ENCODE measurements at regions of chr1 and their contacts with region 1.

Region 1: DNA sequence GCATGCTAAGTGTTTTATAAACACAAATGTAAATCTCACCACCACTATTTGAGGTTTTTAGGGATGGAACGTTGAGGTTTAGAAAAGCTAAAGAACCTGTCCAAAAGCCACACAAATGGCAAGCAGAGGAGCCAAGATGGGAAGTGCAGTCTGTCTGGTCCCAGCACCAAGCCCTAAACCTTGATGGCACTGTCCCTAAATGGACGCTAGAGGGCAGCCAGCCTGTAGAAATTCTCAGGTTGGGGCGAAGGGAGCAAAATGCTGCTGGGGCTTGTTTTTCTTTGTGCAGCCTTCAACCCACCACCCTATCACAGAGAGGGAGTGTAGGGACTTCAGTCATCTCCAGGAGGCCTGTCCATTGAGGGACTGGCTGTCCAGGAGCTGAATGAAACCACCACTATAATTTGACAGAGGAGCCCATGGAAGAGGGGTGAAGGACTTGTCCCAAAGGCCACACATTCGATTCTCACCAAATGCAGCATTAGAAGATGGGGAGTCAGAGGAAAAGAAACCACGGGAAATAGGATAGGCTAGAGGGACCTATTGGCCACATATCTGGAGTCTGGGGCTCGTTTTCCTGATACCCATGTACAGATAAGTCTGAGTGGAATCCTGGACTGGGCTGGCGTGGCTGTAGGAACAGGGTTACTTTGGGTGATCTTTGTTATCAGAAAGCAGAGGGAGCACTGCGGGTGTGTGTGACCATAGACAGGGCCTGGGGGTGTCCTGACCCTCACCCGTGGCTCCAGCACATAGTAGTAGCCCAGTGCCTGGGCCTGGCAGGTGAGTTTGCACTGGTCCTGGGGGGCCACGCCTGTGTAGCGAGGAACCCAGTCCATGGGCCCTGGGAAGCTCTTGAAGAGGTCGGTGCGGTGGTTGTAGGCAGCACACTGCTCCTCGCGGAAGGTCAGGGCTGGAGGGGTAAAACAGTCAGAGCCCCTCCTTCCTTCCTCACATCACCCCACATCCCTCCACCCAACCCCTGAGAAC is 6.1 kb downstream of the ADAMTS4 start:
- DNase-seq: peak; percentile 83
- CTCF ChIP-seq: peak; percentile 94

Region 2: DNA sequence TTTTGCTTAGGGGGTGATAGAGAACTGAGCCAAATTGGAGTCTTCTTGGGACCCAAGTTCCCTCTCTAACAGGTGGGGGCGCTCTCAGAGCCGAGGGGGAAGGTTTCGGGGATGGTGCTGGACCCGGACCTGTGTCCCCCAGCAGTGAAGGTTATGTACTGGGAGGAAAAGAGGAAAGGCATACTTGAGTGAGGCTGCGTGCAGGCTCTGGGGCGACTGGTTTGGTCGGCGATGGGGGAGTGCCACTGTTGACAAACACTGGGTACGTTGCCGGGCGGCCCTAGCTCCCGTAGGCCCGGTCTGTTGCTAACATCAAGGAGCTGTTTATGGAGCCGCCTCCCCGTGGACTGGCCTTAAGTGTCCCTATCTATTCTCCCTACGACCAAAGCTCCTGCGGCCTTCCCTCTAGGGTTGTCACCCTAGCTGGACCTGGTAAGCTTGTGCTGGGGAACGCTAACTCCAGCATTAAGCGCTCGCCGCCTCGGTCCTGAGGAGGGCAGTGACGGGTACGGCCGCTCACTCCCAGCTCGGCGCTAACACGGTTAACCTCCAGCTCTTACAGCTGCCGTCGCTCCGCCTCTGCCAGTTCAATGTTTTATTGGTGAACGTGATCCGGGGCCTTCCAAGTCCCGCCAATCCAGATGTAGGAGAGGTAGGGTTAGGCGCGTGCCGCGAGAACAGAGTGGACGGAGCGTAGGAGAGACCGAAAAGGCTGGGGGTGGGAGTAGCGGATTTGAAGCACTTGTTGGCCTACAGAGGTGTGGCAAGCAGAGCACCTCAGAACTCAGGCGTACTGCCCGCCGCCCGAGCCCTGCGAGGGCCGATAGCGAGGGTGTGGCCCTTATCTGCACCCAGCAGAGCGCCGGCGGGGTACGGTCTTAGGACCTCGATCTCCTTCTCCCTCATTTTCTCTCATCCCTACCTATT is 26.8 kb before region 1 on chr1 and contains the start of gene PPOX:
- CTCF ChIA-PET with region 1: interaction called, 32 read pairs
- POLR2A ChIA-PET with region 1: no interaction called
- DNase-seq: peak; percentile 92
- CTCF ChIP-seq: peak; percentile 58

Region 3: GRCh38 chr1:161171191-161171590 is 21.6 kb before region 1 on chr1:
- CTCF ChIA-PET with region 1: interaction called, 32 read pairs
- POLR2A ChIA-PET with region 1: no interaction called
- DNase-seq: no peak
- CTCF ChIP-seq: no peak

Region 4: GRCh38 chr1:161209790-161210409 is 17.1 kb after region 1 on chr1:
- CTCF ChIA-PET with region 1: interaction called, 23 read pairs
- POLR2A ChIA-PET with region 1: no interaction called
- DNase-seq: peak; percentile 74
- CTCF ChIP-seq: peak; percentile 90

Region 5: GRCh38 chr1:161216945-161217712 is 24.4 kb after region 1 on chr1:
- CTCF ChIA-PET with region 1: interaction called, 20 read pairs
- POLR2A ChIA-PET with region 1: interaction called, 3 read pairs
- DNase-seq: peak; percentile 63
- CTCF ChIP-seq: no peak

Region 6: DNA sequence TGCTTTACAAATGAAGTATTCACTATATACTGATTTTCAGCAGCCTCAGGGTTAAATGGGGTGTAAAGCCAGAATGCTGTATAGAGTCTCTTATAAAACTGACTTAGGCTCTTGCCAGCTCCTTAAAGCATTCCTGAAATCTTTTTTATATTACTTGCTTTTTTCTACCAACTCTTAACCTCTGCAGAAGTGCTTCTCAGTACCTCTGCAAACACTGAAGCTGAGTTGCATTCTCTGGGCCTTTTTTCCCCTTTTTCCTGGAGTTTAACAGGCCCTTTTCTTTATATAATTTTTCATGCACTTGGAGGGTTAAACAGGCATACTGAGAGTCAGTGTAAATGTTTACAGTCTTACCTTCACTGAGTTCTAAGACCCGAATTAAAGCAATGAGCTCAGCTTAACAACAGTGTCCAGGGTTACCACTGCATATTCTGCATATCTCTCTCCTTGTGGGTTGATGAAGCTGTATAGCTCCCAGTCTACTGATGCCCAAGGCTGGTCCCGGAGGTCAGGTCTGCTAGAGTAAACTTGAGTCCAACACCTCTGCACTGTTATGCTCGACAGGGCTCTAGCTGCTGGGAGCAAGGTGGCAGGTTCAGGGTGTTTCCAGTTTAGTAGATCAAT is 215.8 kb after region 1 on chr1:
- CTCF ChIA-PET with region 1: no interaction called
- POLR2A ChIA-PET with region 1: no interaction called
- DNase-seq: no peak
- CTCF ChIP-seq: no peak

Measured in GM10248 (cell line).